Activated CD4-positive, alpha-beta memory T cell treated with anti-CD3 and anti-CD28 coated beads for 36 hours (primary cell): ENCODE measurements at regions of chr3 and their contacts with region 1.

Region 1: GRCh38 chr3:39327746-39328349 is 1.7 kb upstream of the CCR8 start:
- DNase-seq: peak; percentile 69
- H3K4me3 Mint-ChIP-seq: no peak overlapping the region
- H3K27ac Mint-ChIP-seq: peak overlapping the region; percentile 35
- H3K4me1 Mint-ChIP-seq: peaks cover 62% of the 10 kb centered on the region
- H3K27me3 Mint-ChIP-seq: no peaks in the 10 kb centered on the region

Region 2: DNA sequence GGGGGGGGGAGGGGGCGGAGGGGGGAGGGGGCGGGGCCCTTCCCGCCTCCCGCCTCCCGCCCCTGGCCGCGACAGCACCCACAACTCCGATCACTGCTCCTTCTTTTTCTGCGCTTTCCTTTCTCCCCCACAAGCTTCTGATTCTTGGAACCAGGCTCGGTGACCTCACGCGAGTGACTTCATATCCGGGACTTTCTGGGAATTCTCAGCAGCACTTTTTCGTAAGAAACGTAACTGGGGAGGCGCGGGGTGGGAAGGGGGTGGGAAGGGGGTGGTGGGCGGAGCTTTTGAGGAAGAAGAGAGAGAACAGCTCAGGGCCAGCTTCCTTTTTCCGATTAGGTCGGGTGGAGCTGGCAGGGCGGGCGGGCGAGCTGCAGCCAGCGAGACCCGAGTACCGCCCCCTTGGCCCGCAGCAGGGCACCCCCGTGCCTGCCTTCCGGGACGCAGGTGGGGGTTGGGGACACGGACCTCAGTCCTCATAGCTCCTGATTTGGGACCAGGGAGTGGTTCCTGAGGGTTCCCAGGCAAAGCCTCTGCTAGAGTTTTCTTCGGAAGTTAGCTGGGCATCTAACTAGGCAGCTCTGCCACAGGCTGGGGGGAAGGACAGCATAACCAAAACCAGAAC is 150.0 kb before region 1 on chr3:
- CTCF ChIA-PET with region 1: no interaction called
- POLR2A ChIA-PET with region 1: no interaction called
- intact Hi-C with region 1: no loop called
- DNase-seq: peak; percentile 89
- H3K4me3 Mint-ChIP-seq: peak overlapping the region; percentile 61
- H3K27ac Mint-ChIP-seq: peak overlapping the region; percentile 88
- H3K4me1 Mint-ChIP-seq: peaks cover 51% of the 10 kb centered on the region
- H3K27me3 Mint-ChIP-seq: no peaks in the 10 kb centered on the region

Region 3: GRCh38 chr3:39267631-39268548 is 60.0 kb before region 1 on chr3:
- CTCF ChIA-PET with region 1: no interaction called
- POLR2A ChIA-PET with region 1: no interaction called
- intact Hi-C with region 1: loop called (anchors 1 kb)
- DNase-seq: peak; percentile 86
- H3K4me3 Mint-ChIP-seq: peak overlapping the region; percentile 45
- H3K27ac Mint-ChIP-seq: peak overlapping the region; percentile 94
- H3K4me1 Mint-ChIP-seq: peaks cover 30% of the 10 kb centered on the region
- H3K27me3 Mint-ChIP-seq: no peaks in the 10 kb centered on the region

Region 4: GRCh38 chr3:39295184-39295775 is 32.6 kb before region 1 on chr3:
- CTCF ChIA-PET with region 1: interaction called, 18 read pairs
- POLR2A ChIA-PET with region 1: no interaction called
- intact Hi-C with region 1: loop called (anchors 1 kb)
- DNase-seq: peak; percentile 21
- H3K4me3 Mint-ChIP-seq: no peak overlapping the region
- H3K27ac Mint-ChIP-seq: no peak overlapping the region
- H3K4me1 Mint-ChIP-seq: peaks cover 21% of the 10 kb centered on the region
- H3K27me3 Mint-ChIP-seq: no peaks in the 10 kb centered on the region

Region 5: DNA sequence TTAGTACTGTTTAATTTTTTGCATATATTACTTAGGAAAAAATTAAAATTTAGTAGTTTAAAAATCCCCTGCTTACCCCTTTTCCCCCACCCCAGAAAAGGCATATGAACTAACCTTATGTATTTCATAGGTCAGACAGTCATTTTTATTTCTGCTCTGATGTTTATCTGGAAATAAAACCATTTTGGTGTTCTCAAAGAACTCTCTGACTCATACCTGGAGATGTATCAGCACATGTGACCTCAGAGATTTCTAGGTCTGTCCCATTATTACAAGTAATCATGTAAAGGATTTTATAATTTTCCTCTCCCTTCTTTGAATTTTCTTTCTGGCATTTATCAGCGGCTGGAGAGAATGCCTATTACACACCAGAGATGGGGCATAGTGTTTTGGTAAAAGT is 12.4 kb before region 1 on chr3:
- CTCF ChIA-PET with region 1: no interaction called
- POLR2A ChIA-PET with region 1: no interaction called
- intact Hi-C with region 1: loop called (anchors 1 kb)
- DNase-seq: no peak
- H3K4me3 Mint-ChIP-seq: no peak overlapping the region
- H3K27ac Mint-ChIP-seq: no peak overlapping the region
- H3K4me1 Mint-ChIP-seq: peaks cover 14% of the 10 kb centered on the region
- H3K27me3 Mint-ChIP-seq: peaks cover 6% of the 10 kb centered on the region

Region 6: DNA sequence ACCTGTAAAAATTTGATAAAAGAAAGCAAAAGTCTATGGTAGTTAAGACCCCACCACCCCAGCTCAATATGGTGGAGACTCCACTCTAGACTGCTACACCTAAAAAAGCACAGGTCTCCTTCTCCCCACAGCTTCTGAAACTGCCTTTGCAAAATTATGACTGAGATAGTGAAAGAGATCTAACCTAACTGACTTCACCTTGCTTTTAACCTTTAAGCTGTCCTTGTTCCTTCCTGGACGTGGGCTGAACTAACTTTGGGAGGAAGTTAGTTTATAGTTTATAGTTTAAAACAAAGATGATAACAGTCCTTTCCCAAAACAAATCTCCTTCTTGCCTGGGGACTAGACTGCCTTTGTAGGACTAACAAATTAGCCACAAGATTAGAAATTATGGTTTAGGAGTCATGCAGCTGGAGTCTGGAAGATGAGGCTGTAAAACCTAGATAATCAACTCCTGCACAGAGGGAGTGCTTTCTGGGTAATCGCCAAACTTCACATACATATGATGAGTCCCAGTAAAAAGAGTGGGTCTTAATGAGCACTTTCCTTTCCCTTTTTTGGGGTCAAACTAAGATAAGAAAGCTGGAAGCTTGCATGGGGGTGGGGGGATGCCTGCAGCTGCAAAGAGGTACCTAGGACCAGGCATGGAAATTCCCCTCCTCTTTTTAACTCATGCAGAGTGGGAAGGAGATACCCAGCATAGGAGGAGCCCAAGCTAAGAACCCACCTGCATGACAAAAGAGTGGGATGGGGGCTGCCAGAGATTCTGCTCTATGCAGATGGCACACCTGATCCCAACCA is 19.1 kb after region 1 on chr3:
- CTCF ChIA-PET with region 1: no interaction called
- POLR2A ChIA-PET with region 1: interaction called, 3 read pairs
- intact Hi-C with region 1: loop called (anchors 1 kb)
- DNase-seq: no peak
- H3K4me3 Mint-ChIP-seq: no peak overlapping the region
- H3K27ac Mint-ChIP-seq: peak overlapping the region; percentile 11
- H3K4me1 Mint-ChIP-seq: peaks cover 36% of the 10 kb centered on the region
- H3K27me3 Mint-ChIP-seq: no peaks in the 10 kb centered on the region

Region 7: GRCh38 chr3:39361252-39361927 is 33.5 kb after region 1 on chr3:
- CTCF ChIA-PET with region 1: no interaction called
- POLR2A ChIA-PET with region 1: no interaction called
- intact Hi-C with region 1: loop called (anchors 1 kb)
- DNase-seq: peak; percentile 75
- H3K4me3 Mint-ChIP-seq: peak overlapping the region; percentile 35
- H3K27ac Mint-ChIP-seq: peak overlapping the region; percentile 53
- H3K4me1 Mint-ChIP-seq: peaks cover 43% of the 10 kb centered on the region
- H3K27me3 Mint-ChIP-seq: no peaks in the 10 kb centered on the region

Region 8: DNA sequence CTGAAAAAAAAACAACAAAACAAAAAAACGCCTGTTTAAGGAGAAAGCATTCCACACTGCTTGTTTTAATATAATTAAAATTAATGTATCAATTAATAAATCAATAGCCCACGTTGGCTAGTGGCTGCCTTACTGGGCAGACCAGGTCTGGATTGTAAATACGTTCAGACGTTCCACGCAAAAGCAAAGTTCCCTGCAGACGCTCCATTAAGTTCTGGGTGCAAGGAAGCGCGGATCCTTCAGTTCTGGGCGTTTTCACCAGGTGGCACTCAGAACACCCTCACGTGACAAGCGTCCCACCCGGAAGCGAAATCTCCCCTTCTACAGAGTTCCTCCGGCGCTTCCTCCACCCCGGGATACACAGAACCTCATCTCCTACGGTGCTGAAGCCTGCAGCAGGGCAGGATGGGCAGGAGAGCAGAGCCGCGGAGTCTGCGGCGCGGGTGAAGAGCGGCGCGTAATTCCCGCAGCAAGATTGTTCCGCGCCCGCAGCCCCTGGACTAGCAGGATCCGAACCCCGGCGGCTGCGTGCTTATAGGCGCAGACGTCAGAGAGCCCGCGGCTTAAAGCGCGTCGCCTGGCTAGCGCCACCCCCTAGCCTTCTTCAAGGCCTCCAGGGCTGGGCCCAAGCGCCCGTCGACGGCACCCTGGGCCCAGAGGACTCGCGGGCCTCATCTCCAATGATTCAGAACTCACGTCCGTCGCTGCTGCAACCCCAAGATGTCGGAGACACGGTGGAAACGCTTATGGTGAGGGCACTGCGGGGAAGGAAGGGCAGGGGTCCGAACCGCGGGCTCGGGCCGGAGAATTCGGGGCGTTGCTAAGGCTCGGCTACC is 55.4 kb after region 1 on chr3 and contains the start of gene SLC25A38:
- CTCF ChIA-PET with region 1: interaction called, 5 read pairs
- POLR2A ChIA-PET with region 1: no interaction called
- intact Hi-C with region 1: loop called (anchors 5 kb)
- DNase-seq: peak; percentile 89
- H3K4me3 Mint-ChIP-seq: peak within 1 kb of the TSS; percentile 93
- H3K27ac Mint-ChIP-seq: peak within 1 kb of the TSS; percentile 97
- H3K4me1 Mint-ChIP-seq: peaks cover 36% of the 10 kb centered on the region
- H3K27me3 Mint-ChIP-seq: no peaks in the 10 kb centered on the region
- total RNA-seq, gene SLC25A38: 23.1 to 24.9 TPM